HEK293T (cell line): ENCODE measurements at regions of chr5 and their contacts with region 1.

Region 1: DNA sequence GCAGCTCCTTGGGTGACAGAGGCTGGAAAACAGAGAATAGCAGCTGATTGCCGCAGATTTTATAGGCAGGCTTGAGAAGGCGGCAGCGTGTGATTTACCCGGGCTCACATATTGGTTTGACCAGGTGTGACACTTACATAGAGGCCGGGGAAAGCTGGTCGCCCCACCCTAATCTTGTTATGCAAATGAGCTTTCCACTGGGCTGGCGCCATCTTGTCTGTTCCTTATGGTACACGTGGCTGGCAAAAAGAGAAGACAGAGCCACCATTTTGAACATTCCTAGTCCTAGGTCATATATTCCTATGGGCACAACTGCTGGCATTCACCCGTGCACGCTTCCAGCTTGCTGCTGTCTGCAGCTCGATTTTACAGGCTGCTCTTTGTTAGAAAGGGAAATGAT is 11.3 kb upstream of the SPZ1 start:
- DNase-seq: no peak

Region 2: DNA sequence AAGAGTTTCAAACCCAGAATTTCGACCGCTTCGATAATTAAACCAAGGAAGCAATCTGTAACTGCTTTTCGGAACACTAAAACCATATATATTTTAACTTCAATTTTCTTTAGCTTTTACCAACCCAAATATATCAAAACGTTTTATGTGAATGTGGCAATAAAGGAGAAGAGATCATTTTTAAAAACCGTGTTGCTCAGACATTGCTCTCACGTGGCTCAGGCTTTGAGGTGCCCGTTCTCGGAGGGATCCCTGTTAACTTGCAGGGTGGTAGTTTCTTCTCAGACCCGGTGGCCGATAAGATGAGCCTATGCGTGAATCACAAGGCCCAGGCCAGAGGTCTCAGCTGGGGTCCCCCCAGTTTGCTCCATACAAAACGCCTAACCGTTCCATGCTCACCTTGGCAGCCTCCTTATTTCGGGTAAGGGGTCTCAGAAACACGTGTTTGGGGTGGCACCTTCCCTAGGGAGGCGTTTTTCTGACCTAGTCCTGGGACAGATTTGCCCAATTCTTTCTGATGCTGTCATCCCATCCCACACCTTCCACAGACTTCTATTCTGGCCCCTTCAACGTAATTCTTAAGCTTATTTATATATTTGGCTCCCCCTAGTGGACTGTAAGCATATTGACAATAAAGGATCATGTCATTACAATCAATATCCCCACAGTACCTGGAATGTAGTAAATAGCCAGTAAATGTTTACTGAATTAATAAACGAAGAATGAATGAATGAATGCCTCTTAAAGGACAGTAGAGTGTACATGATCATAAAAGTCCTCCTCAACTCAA is 225.2 kb before region 1 on chr5:
- CTCF ChIA-PET with region 1: interaction called, 12 read pairs
- POLR2A ChIA-PET with region 1: no interaction called
- DNase-seq: peak; percentile 54

Region 3: DNA sequence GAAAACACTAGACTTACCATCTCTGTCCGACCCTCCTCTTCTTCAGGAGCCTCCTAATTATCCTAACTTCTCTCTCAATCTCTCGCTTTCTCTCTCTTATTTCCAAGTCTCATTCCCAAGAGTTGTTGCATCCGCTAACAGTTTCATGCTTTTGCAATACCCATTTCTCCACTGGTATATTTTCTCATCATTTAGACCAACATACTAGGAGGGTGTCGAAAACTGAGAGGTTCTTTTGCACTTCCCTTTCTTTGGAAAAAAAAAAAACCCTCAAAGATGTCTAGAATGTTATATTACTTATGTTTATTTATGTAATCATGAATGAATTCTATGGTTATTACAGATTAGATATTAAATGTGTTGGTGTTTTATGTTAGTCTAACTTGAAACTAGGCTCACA is 47.2 kb after region 1 on chr5:
- CTCF ChIA-PET with region 1: no interaction called
- POLR2A ChIA-PET with region 1: no interaction called
- DNase-seq: no peak